ENCODE measurements at regions of chr4 and their contacts with region 1.

Region 1: DNA sequence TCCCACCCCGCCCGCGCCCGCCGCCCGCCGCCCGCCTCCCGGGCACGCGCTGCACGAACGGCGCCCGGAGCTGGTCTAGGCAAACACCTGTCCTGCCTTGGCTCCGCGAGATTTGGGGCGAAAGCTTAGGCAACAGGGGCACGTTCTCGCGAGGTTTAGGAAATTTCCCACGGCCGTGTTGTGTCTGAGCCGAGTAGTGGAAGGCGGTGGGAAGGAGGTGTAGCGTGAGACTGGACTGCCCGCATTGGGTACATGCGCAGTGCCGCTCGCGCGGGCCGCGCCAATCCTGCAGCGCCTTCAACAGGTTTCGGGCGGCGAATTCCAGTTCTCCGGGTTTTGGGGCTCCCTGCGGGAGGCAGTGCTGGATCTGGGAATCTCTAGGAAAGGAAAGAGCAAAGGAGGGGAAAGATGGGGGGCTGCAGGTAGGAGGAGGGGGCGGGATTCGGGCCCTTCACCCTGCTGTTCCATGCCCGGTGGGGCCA is 1.3 kb upstream of the RBPJ start:
- DNase-seq: peak; percentile 100
- ATAC-seq: peak; percentile 69
- H3K4me3 ChIP-seq: peak overlapping the region; percentile 100
- H3K27ac ChIP-seq: peak overlapping the region; percentile 74
- H3K4me1 ChIP-seq: no peaks in the 10 kb centered on the region
- H3K27me3 ChIP-seq: no peaks in the 10 kb centered on the region
- CTCF ChIP-seq: peak; percentile 27
- POLR2A ChIP-seq: peak; percentile 37; the same call in 1 of the 2 replicates
- RAD21 ChIP-seq: peak; percentile 32; the same call in 1 of the 2 replicates

Region 2: GRCh38 chr4:25792200-25792791 is 527.2 kb before region 1 on chr4:
- CTCF ChIA-PET with region 1: no interaction called
- POLR2A ChIA-PET with region 1: no interaction called
- dilution Hi-C with region 1: no loop called
- in situ Hi-C with region 1: no loop called
- intact Hi-C with region 1: no loop called
- DNase-seq: no peak
- ATAC-seq: no peak
- H3K4me3 ChIP-seq: no peak overlapping the region
- H3K27ac ChIP-seq: no peak overlapping the region
- H3K4me1 ChIP-seq: peaks cover 11% of the 10 kb centered on the region
- H3K27me3 ChIP-seq: no peaks in the 10 kb centered on the region
- CTCF ChIP-seq: 0 out of 2 replicates have a peak, but pooled peaks have one; percentile 11
- POLR2A ChIP-seq: no peak
- RAD21 ChIP-seq: no peak

Region 3: DNA sequence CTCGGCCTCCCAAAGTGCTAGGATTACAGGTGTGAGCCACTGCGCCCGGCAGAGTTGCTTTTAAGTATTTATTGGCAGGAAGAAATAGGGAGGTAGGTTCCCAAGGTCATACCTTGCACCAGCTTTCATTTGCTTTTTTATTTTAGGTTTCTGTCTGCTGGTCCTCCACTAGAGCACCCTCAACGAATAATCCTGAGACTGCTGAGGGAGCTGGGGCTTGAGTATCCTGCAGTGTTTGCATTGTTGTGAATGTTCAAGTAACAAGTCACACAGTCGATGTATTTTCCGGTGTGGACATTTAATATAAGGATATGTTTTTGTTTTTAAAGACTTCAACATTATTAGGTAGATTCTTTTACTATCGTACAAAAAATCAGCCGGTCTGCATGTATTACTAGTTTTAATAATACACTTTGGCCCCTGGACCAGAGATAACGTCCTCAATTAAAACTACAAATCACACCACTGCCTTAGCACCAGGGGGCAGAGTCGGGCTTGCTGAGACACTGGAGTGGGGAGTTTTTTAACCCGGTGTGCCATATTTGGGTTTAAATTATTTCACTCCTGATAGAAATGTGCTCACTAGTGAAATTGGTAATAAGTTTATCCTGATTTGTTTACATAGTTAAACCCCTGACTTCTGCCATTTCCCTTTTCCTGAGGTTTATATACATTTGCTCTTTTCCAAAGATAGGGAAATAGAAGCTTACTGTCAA is 393.9 kb before region 1 on chr4:
- CTCF ChIA-PET with region 1: no interaction called
- POLR2A ChIA-PET with region 1: no interaction called
- dilution Hi-C with region 1: no loop called
- in situ Hi-C with region 1: no loop called
- intact Hi-C with region 1: loop called (anchors 5 kb)
- DNase-seq: peak; percentile 45
- ATAC-seq: peak; percentile 81
- H3K4me3 ChIP-seq: no peak overlapping the region
- H3K27ac ChIP-seq: no peak overlapping the region
- H3K4me1 ChIP-seq: peaks cover 4% of the 10 kb centered on the region
- H3K27me3 ChIP-seq: no peaks in the 10 kb centered on the region
- CTCF ChIP-seq: peak; percentile 62
- POLR2A ChIP-seq: no peak
- RAD21 ChIP-seq: peak; percentile 66

Region 4: DNA sequence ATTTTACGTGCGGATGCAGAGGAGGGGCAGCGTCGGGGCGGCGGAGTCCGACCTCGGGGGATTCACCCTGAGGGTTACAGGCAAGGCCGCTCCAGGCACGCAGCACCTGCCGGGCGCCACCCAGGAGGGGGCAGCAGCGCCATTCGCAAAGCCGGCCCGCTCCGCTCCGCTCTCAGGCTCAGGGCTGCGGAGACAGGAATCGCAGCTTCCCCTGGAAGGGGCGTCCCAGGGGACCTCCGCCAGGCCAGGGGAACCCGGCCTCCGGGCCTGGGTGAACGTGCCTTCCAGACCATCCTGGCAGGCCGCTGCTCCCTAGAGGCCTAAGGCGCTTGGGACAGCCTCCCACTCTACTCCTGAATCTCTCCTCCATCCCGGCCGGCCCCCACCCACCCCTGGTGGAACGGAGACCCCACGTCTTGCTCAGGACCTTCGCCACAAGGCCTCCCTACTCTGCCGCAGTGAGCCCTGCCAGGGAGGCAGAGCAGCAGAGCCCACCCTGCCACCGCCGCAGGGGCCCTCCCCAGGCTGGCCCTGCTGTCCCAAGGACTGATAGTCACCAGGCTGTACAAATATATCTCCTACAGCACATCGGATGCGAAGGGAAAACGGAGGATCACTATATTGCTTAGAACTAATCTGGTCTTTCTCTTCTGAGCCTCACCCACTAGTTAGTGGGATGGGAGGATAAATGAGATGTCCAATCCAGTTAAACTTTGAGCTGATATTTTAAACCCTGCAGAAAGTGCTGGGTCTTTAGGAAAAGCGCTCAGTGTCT is 290.5 kb before region 1 on chr4:
- CTCF ChIA-PET with region 1: no interaction called
- POLR2A ChIA-PET with region 1: no interaction called
- dilution Hi-C with region 1: no loop called
- in situ Hi-C with region 1: loop called (anchors 10 kb)
- intact Hi-C with region 1: loop called (anchors 1 kb)
- DNase-seq: peak; percentile 58
- ATAC-seq: peak; percentile 79
- H3K4me3 ChIP-seq: no peak overlapping the region
- H3K27ac ChIP-seq: no peak overlapping the region
- H3K4me1 ChIP-seq: peaks cover 19% of the 10 kb centered on the region
- H3K27me3 ChIP-seq: peaks cover 3% of the 10 kb centered on the region
- CTCF ChIP-seq: peak; percentile 77
- POLR2A ChIP-seq: no peak
- RAD21 ChIP-seq: peak; percentile 93

Region 5: GRCh38 chr4:26081795-26082498 is 237.6 kb before region 1 on chr4:
- CTCF ChIA-PET with region 1: interaction called, 11 read pairs
- POLR2A ChIA-PET with region 1: interaction called, 3 read pairs
- dilution Hi-C with region 1: no loop called
- in situ Hi-C with region 1: loop called (anchors 5 kb)
- intact Hi-C with region 1: loop called (anchors 1 kb)
- DNase-seq: peak; percentile 52
- ATAC-seq: no peak
- H3K4me3 ChIP-seq: no peak overlapping the region
- H3K27ac ChIP-seq: no peak overlapping the region
- H3K4me1 ChIP-seq: peaks cover 15% of the 10 kb centered on the region
- H3K27me3 ChIP-seq: no peaks in the 10 kb centered on the region
- CTCF ChIP-seq: peak; percentile 57
- POLR2A ChIP-seq: no peak
- RAD21 ChIP-seq: peak; percentile 58

Region 6: GRCh38 chr4:26171941-26172340 is 147.6 kb before region 1 on chr4:
- CTCF ChIA-PET with region 1: no interaction called
- POLR2A ChIA-PET with region 1: interaction called, 11 read pairs
- dilution Hi-C with region 1: no loop called
- in situ Hi-C with region 1: loop called (anchors 10 kb)
- intact Hi-C with region 1: loop called (anchors 1 kb)
- DNase-seq: peak; percentile 100
- ATAC-seq: peak; percentile 73
- H3K4me3 ChIP-seq: no peak overlapping the region
- H3K27ac ChIP-seq: peak overlapping the region; percentile 87
- H3K4me1 ChIP-seq: peaks cover 26% of the 10 kb centered on the region
- H3K27me3 ChIP-seq: no peaks in the 10 kb centered on the region
- CTCF ChIP-seq: no peak
- POLR2A ChIP-seq: no peak
- RAD21 ChIP-seq: peak; percentile 22

Region 7: DNA sequence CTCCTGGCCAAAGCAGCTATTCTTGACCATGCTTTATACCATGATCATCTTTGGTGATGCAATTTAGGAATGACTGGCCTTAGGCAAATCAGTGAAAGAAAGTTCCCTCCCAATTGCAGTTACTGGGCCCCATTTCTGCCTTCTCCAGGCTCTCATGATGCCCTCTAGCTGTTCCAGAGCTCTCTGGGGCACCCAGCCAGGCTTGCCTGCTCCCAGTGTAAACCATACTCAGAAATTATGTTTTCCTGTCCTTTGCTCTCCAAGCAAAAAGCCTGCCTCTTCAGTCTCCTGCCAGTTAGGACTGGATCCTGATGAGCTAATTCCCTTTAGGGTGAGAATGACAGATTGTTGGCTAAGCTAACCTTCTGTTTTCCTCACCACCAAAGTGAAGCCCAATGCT is 84.0 kb before region 1 on chr4:
- CTCF ChIA-PET with region 1: no interaction called
- POLR2A ChIA-PET with region 1: no interaction called
- dilution Hi-C with region 1: no loop called
- in situ Hi-C with region 1: no loop called
- intact Hi-C with region 1: loop called (anchors 5 kb)
- DNase-seq: peak; percentile 75
- ATAC-seq: peak; percentile 63
- H3K4me3 ChIP-seq: no peak overlapping the region
- H3K27ac ChIP-seq: no peak overlapping the region
- H3K4me1 ChIP-seq: peaks cover 14% of the 10 kb centered on the region
- H3K27me3 ChIP-seq: no peaks in the 10 kb centered on the region
- CTCF ChIP-seq: no peak; the same call in 1 of the 2 replicates
- POLR2A ChIP-seq: no peak
- RAD21 ChIP-seq: no peak

Region 8: GRCh38 chr4:26356081-26356501 is 36.6 kb after region 1 on chr4:
- CTCF ChIA-PET with region 1: no interaction called
- POLR2A ChIA-PET with region 1: no interaction called
- dilution Hi-C with region 1: no loop called
- in situ Hi-C with region 1: no loop called
- intact Hi-C with region 1: no loop called
- DNase-seq: peak; percentile 40
- ATAC-seq: no peak
- H3K4me3 ChIP-seq: no peak overlapping the region
- H3K27ac ChIP-seq: no peak overlapping the region
- H3K4me1 ChIP-seq: peaks cover 11% of the 10 kb centered on the region
- H3K27me3 ChIP-seq: no peaks in the 10 kb centered on the region
- CTCF ChIP-seq: no peak
- POLR2A ChIP-seq: no peak
- RAD21 ChIP-seq: no peak

Region 9: GRCh38 chr4:26441102-26441501 is 121.6 kb after region 1 on chr4:
- CTCF ChIA-PET with region 1: no interaction called
- POLR2A ChIA-PET with region 1: no interaction called
- dilution Hi-C with region 1: no loop called
- in situ Hi-C with region 1: no loop called
- intact Hi-C with region 1: no loop called
- DNase-seq: peak; percentile 73
- ATAC-seq: peak; percentile 22
- H3K4me3 ChIP-seq: no peak overlapping the region
- H3K27ac ChIP-seq: no peak overlapping the region
- H3K4me1 ChIP-seq: peaks cover 2% of the 10 kb centered on the region; the same call in 1 of the 2 replicates
- H3K27me3 ChIP-seq: no peaks in the 10 kb centered on the region
- CTCF ChIP-seq: no peak
- POLR2A ChIP-seq: no peak
- RAD21 ChIP-seq: no peak

Region 10: DNA sequence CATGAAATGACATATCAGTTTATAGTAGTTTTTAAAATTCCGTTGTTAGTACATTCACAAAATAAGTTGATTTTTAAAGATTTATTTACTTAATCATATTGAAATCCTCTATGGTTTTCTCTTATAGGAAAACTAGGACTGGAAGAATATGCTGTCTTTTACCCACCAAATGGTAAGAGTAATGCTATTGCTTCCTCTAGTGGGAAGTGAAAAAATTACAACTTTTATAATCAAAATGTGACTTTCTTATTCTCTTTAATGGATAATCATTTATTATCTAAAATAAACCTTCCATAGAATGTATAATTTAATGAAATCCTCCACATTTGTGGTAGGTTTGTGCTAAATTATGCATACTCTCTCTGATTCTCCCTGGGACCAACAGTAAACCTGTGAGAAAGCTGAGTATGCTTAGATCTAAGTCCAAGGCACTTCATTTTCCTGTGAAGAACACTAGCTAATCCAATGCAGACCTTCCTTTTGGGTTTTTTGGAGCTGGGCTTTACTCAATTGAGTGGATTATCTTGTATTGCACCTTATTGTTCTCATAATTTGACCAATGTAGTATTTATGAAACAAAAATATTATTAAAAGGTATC is 400.5 kb after region 1 on chr4:
- CTCF ChIA-PET with region 1: no interaction called
- POLR2A ChIA-PET with region 1: no interaction called
- dilution Hi-C with region 1: no loop called
- in situ Hi-C with region 1: loop called (anchors 10 kb)
- intact Hi-C with region 1: no loop called
- DNase-seq: peak; percentile 63
- ATAC-seq: peak; percentile 60
- H3K4me3 ChIP-seq: no peak overlapping the region
- H3K27ac ChIP-seq: no peak overlapping the region
- H3K4me1 ChIP-seq: peaks cover 3% of the 10 kb centered on the region; the same call in 1 of the 2 replicates
- H3K27me3 ChIP-seq: no peaks in the 10 kb centered on the region
- CTCF ChIP-seq: peak; percentile 93
- POLR2A ChIP-seq: 0 out of 2 replicates have a peak, but pooled peaks have one; percentile 30
- RAD21 ChIP-seq: peak; percentile 92

Measured in IMR-90 (cell line).